Adrenal gland (tissue), 19 donors: ENCODE measurements at regions of chr5 and their contacts with region 1.

Region 1: DNA sequence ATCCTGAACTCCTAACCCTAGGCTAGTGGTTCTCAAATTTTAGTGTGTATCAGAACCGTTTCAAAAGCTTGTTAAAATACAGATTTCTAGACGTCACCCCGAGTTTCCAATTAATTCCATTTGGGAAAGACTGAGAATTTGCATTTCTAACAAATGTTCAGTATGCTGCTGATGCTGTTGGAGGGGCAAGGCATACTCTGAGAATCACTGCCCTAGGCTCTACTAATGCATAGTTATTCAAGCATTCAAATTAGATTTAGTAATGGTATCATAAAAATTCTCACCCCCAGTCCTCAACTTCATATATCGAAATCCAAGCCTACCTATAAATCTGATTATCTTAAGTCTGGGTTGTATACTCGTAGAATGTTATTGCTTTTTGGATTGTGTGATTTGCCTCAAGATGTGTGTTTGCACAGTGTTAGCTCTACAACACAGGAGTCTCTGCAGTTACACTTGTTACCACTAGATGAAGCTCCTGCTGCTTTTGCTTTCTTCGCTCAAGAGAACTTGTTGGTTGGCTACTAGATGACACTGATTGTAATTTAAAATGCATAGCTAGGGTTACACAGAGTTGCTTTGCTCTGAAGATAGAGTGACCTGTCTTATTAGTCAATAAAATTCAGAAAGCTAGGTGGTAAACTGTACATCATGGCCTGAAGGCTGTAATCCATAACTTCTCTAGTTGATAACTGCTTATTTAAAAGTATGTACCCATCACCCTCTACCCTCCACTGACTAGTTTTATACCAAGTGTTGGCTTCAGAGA is 7.5 kb upstream of the ERAP2 start:
- DNase-seq: peak in 2 of 7 donors; percentile 18 to 42
- H3K4me3 ChIP-seq: no peak overlapping the region
- H3K27ac ChIP-seq: no peak overlapping the region
- H3K4me1 ChIP-seq: no peaks in the 10 kb centered on the region
- H3K27me3 ChIP-seq: no peaks in the 10 kb centered on the region
- CTCF ChIP-seq: peak; percentile 92 to 98 (median 94)
- POLR2A ChIP-seq: no peak

Region 2: DNA sequence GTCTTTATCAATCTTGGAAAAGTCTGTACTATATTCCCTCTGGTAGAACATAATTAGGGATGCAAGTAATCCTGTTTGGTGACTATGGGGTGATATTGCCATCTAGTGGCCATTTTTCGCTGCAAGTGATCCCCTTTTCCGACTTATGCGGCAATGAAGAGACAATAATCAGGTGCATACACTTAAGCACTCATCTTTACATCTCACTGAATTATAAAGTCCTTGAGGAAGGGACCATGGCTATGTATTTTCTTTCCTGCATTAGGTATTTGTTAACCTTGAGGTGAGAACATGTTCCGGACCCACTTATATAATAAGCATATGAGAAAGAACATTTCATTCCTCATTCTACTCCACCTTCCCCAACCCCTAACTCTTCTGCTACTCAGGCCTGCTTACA is 293.3 kb after region 1 on chr5:
- intact Hi-C with region 1: loop called (anchors 5 to 10 kb)
- DNase-seq: peak; percentile 51 to 86 (median 70)
- H3K4me3 ChIP-seq: no peak overlapping the region
- H3K27ac ChIP-seq: no peak overlapping the region
- H3K4me1 ChIP-seq: peaks cover 0 to 7% of the 10 kb centered on the region in 2 donors
- H3K27me3 ChIP-seq: no peaks in the 10 kb centered on the region
- CTCF ChIP-seq: peak; percentile 73 to 92 (median 85)
- POLR2A ChIP-seq: no peak